WTC11 (cell line): ENCODE measurements at regions of chr22 and their contacts with region 1.

Region 1: DNA sequence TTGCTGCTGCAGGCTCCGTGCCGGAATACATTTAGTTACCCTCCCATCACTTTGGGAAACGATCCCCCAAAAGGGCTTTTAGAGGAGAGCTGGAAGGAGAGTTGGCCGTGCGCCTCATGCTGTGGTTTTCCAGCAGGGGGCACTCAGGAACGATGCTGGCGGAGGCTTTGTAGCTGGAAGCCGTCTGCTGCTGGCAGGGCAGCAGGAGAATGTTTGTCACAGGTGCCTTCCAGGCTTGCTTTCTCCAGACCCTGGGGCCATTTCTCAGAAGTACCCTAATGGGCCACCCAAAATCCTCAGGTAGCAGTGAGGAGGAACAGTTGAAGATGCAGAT is 30.0 kb upstream of the CABP7 start:
- DNase-seq: peak; percentile 86
- ATAC-seq: peak; percentile 70
- H3K4me3 Mint-ChIP-seq: no peak overlapping the region
- H3K27ac Mint-ChIP-seq: peak overlapping the region; percentile 85
- H3K4me1 Mint-ChIP-seq: peaks cover 51% of the 10 kb centered on the region
- H3K27me3 Mint-ChIP-seq: no peaks in the 10 kb centered on the region
- CTCF ChIP-seq: peak; percentile 47

Region 2: GRCh38 chr22:29531419-29531818 is 158.4 kb before region 1 on chr22:
- CTCF ChIA-PET with region 1: no interaction called
- POLR2A ChIA-PET with region 1: no interaction called
- DNase-seq: no peak
- ATAC-seq: no peak
- H3K4me3 Mint-ChIP-seq: no peak overlapping the region
- H3K27ac Mint-ChIP-seq: no peak overlapping the region
- H3K4me1 Mint-ChIP-seq: no peaks in the 10 kb centered on the region
- H3K27me3 Mint-ChIP-seq: no peaks in the 10 kb centered on the region
- CTCF ChIP-seq: no peak

Region 3: DNA sequence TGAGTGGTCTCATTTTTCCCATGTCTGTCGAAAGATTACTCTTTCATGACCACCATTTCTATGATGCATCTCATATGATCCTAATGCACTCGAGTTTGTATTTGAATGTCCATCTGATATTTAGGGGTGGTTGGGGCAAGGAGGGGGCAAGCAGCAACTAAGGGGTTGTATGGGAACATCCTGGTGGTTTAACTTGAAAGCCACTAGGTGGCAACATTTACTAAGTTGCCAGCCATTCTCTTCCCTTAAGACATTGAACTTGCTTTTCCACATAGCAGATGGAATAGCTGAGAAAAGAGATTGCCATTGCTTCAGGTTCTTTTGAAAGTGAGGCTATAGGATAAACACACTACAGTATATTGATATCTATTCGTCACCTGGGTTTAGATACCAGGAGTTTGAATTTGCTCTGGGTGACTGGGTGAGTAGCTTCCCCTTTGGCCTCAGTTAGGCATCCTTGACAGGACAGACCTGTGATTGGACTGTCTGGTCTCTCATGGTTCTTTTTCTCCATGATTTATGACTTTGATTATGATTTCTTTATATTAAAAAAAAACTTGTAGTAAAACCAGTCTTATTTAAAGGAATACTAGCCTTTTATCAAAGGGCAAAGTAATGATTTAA is 54.0 kb before region 1 on chr22:
- CTCF ChIA-PET with region 1: interaction called, 18 read pairs
- POLR2A ChIA-PET with region 1: no interaction called
- DNase-seq: no peak
- ATAC-seq: peak; percentile 90
- H3K4me3 Mint-ChIP-seq: no peak overlapping the region
- H3K27ac Mint-ChIP-seq: peak overlapping the region; percentile 39; the same call in 1 of the 2 replicates
- H3K4me1 Mint-ChIP-seq: peaks cover 3% of the 10 kb centered on the region; the same call in 1 of the 2 replicates
- H3K27me3 Mint-ChIP-seq: no peaks in the 10 kb centered on the region
- CTCF ChIP-seq: peak; percentile 36

Region 4: DNA sequence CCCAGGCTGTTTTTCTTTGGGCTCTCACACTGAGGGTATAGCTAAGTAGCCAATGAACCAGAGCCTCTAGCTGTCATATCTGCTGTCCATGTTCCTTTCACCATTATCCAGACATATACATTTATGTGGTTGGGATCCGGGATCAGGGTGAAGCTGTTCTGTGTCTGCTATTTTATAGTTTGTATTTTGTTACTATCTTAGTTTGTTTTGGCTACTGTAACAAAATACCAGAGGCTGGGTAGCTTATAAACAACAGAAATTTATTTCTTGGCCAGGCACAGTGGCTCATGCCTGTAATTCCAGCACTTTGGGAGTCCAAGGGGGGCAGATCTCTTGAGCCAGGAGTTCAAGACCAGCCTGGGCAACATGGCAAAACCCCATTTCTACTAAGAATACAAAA is 10.5 kb before region 1 on chr22:
- CTCF ChIA-PET with region 1: interaction called, 15 read pairs
- POLR2A ChIA-PET with region 1: no interaction called
- DNase-seq: no peak
- ATAC-seq: no peak
- H3K4me3 Mint-ChIP-seq: no peak overlapping the region
- H3K27ac Mint-ChIP-seq: no peak overlapping the region
- H3K4me1 Mint-ChIP-seq: no peaks in the 10 kb centered on the region
- H3K27me3 Mint-ChIP-seq: no peaks in the 10 kb centered on the region
- CTCF ChIP-seq: no peak

Region 5: GRCh38 chr22:29710193-29710592 is 20.3 kb after region 1 on chr22:
- CTCF ChIA-PET with region 1: interaction called, 105 read pairs
- POLR2A ChIA-PET with region 1: no interaction called
- DNase-seq: no peak
- ATAC-seq: no peak
- H3K4me3 Mint-ChIP-seq: no peak overlapping the region
- H3K27ac Mint-ChIP-seq: no peak overlapping the region
- H3K4me1 Mint-ChIP-seq: peaks cover 12% of the 10 kb centered on the region
- H3K27me3 Mint-ChIP-seq: peaks cover 8% of the 10 kb centered on the region
- CTCF ChIP-seq: no peak

Region 6: GRCh38 chr22:29727131-29727523 is 37.3 kb after region 1 on chr22:
- CTCF ChIA-PET with region 1: interaction called, 12 read pairs
- POLR2A ChIA-PET with region 1: no interaction called
- DNase-seq: peak; percentile 76
- ATAC-seq: peak; percentile 76
- H3K4me3 Mint-ChIP-seq: no peak overlapping the region
- H3K27ac Mint-ChIP-seq: no peak overlapping the region
- H3K4me1 Mint-ChIP-seq: no peaks in the 10 kb centered on the region
- H3K27me3 Mint-ChIP-seq: peaks cover 9% of the 10 kb centered on the region
- CTCF ChIP-seq: no peak

Region 7: DNA sequence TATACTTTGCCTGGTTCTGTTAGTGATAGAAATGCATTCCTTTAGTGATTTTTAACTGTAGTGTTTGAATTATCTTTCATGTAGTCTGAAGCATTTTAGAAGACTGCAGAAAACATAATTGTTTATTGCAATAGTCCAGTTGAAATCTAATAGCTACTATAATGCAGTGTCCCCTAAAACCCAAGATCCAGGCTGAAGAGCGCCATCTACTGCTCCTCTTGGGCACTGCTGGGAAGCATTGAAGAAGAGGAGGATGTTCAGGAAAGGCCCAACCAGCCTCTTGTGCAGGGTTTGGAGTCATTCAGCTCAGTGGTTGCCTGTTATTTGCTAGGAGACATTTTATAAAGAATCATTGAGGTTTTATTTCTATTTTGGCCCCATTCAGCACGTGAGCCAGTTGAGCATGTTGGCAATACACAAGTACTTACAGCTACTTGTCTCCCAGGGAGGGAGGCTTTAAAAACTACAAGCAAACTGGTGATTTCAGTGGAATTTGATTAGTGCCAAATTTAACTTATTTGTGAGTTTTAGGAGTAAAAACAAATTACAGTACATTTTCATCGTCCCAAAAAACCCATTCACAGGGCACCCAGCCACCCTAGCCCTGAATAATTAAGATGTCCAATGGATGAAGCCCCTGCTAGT is 315.5 kb after region 1 on chr22:
- CTCF ChIA-PET with region 1: interaction called, 31 read pairs
- POLR2A ChIA-PET with region 1: no interaction called
- DNase-seq: peak; percentile 81
- ATAC-seq: peak; percentile 84
- H3K4me3 Mint-ChIP-seq: no peak overlapping the region
- H3K27ac Mint-ChIP-seq: no peak overlapping the region
- H3K4me1 Mint-ChIP-seq: no peaks in the 10 kb centered on the region
- H3K27me3 Mint-ChIP-seq: no peaks in the 10 kb centered on the region
- CTCF ChIP-seq: peak; percentile 85